SK-N-SH (cell line): ENCODE measurements at regions of chr1 and their contacts with region 1.

Region 1: GRCh38 chr1:31723828-31724359 is 20.1 kb upstream of the COL16A1 start:
- DNase-seq: no peak
- H3K4me3 ChIP-seq: no peak overlapping the region
- H3K27ac ChIP-seq: no peak overlapping the region
- H3K4me1 ChIP-seq: peaks cover 0 to 10% of the 10 kb centered on the region in 2 experiments; a peak in 1 of 4 replicates
- H3K27me3 ChIP-seq: no peaks in the 10 kb centered on the region
- CTCF ChIP-seq: no peak
- EP300 ChIP-seq: no peak
- RAD21 ChIP-seq: no peak

Region 2: GRCh38 chr1:31745096-31745945 is 21.4 kb after region 1 on chr1:
- CTCF ChIA-PET with region 1: interaction called, 156 read pairs
- POLR2A ChIA-PET with region 1: no interaction called
- DNase-seq: peak; percentile 89
- H3K4me3 ChIP-seq: no peak overlapping the region; a peak in 1 of 4 replicates
- H3K27ac ChIP-seq: peak overlapping the region in 1 of 2 experiments; percentile 18; a peak in 1 of 4 replicates
- H3K4me1 ChIP-seq: peaks cover 0 to 45% of the 10 kb centered on the region in 2 experiments; a peak in 1 of 4 replicates
- H3K27me3 ChIP-seq: no peaks in the 10 kb centered on the region
- CTCF ChIP-seq: peak; percentile 80
- EP300 ChIP-seq: no peak
- RAD21 ChIP-seq: peak; percentile 78

Region 3: DNA sequence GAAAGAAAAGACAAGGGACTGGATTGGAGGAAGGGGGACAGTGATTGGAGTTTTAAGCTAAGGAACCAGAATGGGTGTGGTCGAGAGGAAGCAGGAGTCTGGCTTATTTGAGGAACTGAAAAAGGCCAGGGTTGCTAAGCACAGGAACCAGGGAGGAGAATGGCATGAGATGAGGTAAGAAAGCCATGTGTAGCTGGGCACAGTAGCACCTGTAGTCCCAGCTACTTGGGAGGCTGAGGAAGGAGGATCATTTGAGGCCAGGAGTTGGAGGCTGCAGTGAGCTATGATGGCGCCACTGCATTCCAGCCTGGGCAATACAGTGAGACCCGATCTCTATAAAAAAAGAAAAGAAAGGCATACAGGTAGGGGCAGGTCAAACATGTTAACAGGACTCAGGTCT is 281.6 kb after region 1 on chr1:
- CTCF ChIA-PET with region 1: no interaction called
- POLR2A ChIA-PET with region 1: no interaction called
- DNase-seq: no peak
- H3K4me3 ChIP-seq: no peak overlapping the region
- H3K27ac ChIP-seq: no peak overlapping the region
- H3K4me1 ChIP-seq: 0 out of 4 replicates have a peak, but pooled peaks cover 0 to 6% of the 10 kb centered on the region in 2 experiments
- H3K27me3 ChIP-seq: no peaks in the 10 kb centered on the region
- CTCF ChIP-seq: no peak
- EP300 ChIP-seq: no peak
- RAD21 ChIP-seq: no peak